ENCODE measurements at regions of chr11 and their contacts with region 1.

Region 1: GRCh38 chr11:63986156-63986931 is at the start of gene OTUB1:
- DNase-seq: peak; percentile 89
- ATAC-seq: peak; percentile 84
- H3K4me3 ChIP-seq: peak within 1 kb of the TSS; percentile 76 to 96 (median 93)
- H3K4me3 Mint-ChIP-seq: peak within 1 kb of the TSS; percentile 99
- H3K27ac ChIP-seq: peak within 1 kb of the TSS; percentile 76 to 94
- H3K27ac Mint-ChIP-seq: peak within 1 kb of the TSS; percentile 97
- H3K4me1 ChIP-seq: peaks cover 22 to 39% of the 10 kb centered on the region in 2 donors
- H3K4me1 Mint-ChIP-seq: peaks cover 42% of the 10 kb centered on the region
- H3K27me3 ChIP-seq: no peaks in the 10 kb centered on the region
- H3K27me3 Mint-ChIP-seq: no peaks in the 10 kb centered on the region
- CTCF ChIP-seq: no peak
- total RNA-seq, gene OTUB1: 71.0 and 78.2 TPM in 2 replicates

Region 2: GRCh38 chr11:63681321-63682049 is 304.9 kb before region 1 on chr11 and contains the start of gene RTN3:
- CTCF ChIA-PET with region 1: no interaction called
- POLR2A ChIA-PET with region 1: no interaction called
- intact Hi-C with region 1: loop called (anchors 5 kb)
- DNase-seq: peak; percentile 99
- ATAC-seq: peak; percentile 92
- H3K4me3 ChIP-seq: peak within 1 kb of the TSS; percentile 75 to 98 (median 90)
- H3K4me3 Mint-ChIP-seq: peak within 1 kb of the TSS; percentile 95
- H3K27ac ChIP-seq: peak within 1 kb of the TSS; percentile 83 to 84
- H3K27ac Mint-ChIP-seq: peak within 1 kb of the TSS; percentile 97
- H3K4me1 ChIP-seq: peaks cover 15 to 16% of the 10 kb centered on the region in 2 donors
- H3K4me1 Mint-ChIP-seq: peaks cover 27% of the 10 kb centered on the region
- H3K27me3 ChIP-seq: no peaks in the 10 kb centered on the region
- H3K27me3 Mint-ChIP-seq: peaks cover 6% of the 10 kb centered on the region
- CTCF ChIP-seq: no peak
- total RNA-seq, gene RTN3: 20.1 and 24.9 TPM in 2 replicates

Region 3: DNA sequence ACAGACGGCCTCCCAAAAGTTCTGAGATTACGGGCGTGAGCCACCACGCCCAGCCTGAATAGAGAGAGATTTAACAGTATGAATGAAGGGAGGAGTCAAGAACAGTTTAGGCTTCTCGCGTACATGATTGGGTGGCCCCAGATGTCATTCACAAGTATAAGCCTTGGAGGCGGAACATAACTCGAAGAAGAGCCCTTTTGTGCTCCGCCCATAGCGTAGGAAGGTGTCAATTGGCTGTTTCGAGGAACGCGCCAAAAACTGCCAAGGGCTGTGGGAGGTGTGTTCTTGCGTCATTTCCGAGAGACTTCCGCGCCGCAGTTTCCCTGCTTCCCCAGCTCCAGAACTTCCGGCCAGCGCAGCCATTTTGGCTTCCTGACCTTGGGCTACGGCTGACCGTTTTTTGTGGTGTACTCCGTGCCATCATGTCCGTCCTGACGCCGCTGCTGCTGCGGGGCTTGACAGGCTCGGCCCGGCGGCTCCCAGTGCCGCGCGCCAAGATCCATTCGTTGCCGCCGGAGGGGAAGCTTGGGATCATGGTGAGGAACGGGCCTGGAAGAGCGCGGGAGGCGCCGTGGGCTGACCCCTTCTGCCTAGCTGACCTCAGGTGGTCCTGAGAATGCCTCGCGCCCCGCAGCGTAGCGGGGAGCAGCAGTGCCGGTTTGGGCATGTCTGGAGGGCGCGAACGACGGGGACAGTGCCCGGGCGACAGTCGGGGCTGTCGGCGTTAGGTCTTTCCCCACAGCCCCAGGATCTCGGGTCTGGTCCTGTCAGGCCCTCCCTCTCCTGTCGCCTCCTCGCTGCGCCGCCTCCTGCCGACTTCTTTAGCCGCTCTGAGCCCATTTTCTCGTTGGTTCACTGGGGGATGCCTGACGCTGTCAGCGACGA is 11.8 kb before region 1 on chr11 and contains the start of gene COX8A:
- CTCF ChIA-PET with region 1: no interaction called
- POLR2A ChIA-PET with region 1: interaction called, 6 read pairs
- intact Hi-C with region 1: loop called (anchors 1 kb)
- DNase-seq: peak; percentile 98
- ATAC-seq: peak; percentile 98
- H3K4me3 ChIP-seq: peak within 1 kb of the TSS; percentile 81 to 99 (median 94)
- H3K4me3 Mint-ChIP-seq: peak within 1 kb of the TSS; percentile 99
- H3K27ac ChIP-seq: peak within 1 kb of the TSS; percentile 83 to 94
- H3K27ac Mint-ChIP-seq: peak within 1 kb of the TSS; percentile 98
- H3K4me1 ChIP-seq: peaks cover 6 to 21% of the 10 kb centered on the region in 2 donors
- H3K4me1 Mint-ChIP-seq: peaks cover 29% of the 10 kb centered on the region
- H3K27me3 ChIP-seq: no peaks in the 10 kb centered on the region
- H3K27me3 Mint-ChIP-seq: peaks cover 3% of the 10 kb centered on the region
- CTCF ChIP-seq: no peak
- total RNA-seq, gene COX8A: 92.6 and 99.0 TPM in 2 replicates

Region 4: GRCh38 chr11:64000026-64000739 is 13.8 kb after region 1 on chr11:
- CTCF ChIA-PET with region 1: interaction called, 10 read pairs
- POLR2A ChIA-PET with region 1: interaction called, 4 read pairs
- intact Hi-C with region 1: loop called (anchors 1 kb)
- DNase-seq: peak; percentile 84
- ATAC-seq: peak; percentile 75
- H3K4me3 ChIP-seq: peak overlapping the region in 4 of 5 experiments; percentile 23 to 58 (median 48)
- H3K4me3 Mint-ChIP-seq: peak overlapping the region; percentile 71
- H3K27ac ChIP-seq: no peak overlapping the region
- H3K27ac Mint-ChIP-seq: no peak overlapping the region
- H3K4me1 ChIP-seq: peaks cover 21 to 26% of the 10 kb centered on the region in 2 donors
- H3K4me1 Mint-ChIP-seq: peaks cover 13% of the 10 kb centered on the region
- H3K27me3 ChIP-seq: peaks cover 0 to 10% (median 3%) of the 10 kb centered on the region in 4 experiments
- H3K27me3 Mint-ChIP-seq: peaks cover 4% of the 10 kb centered on the region
- CTCF ChIP-seq: peak; percentile 92

Region 5: GRCh38 chr11:64652586-64653387 is 666.4 kb after region 1 on chr11:
- CTCF ChIA-PET with region 1: no interaction called
- POLR2A ChIA-PET with region 1: no interaction called
- intact Hi-C with region 1: no loop called
- DNase-seq: peak; percentile 78
- ATAC-seq: peak; percentile 51
- H3K4me3 ChIP-seq: no peak overlapping the region
- H3K4me3 Mint-ChIP-seq: no peak overlapping the region
- H3K27ac ChIP-seq: no peak overlapping the region
- H3K27ac Mint-ChIP-seq: no peak overlapping the region
- H3K4me1 ChIP-seq: peaks cover 17 to 33% of the 10 kb centered on the region in 2 donors
- H3K4me1 Mint-ChIP-seq: peaks cover 28% of the 10 kb centered on the region
- H3K27me3 ChIP-seq: peaks cover 0 to 4% (median 0%) of the 10 kb centered on the region in 4 experiments
- H3K27me3 Mint-ChIP-seq: peaks cover 3% of the 10 kb centered on the region
- CTCF ChIP-seq: peak; percentile 70